ENCODE measurements at regions of chr7 and their contacts with region 1.

Region 1: GRCh38 chr7:64902806-64903721 is at the start of gene ZNF273:
- DNase-seq: peak; percentile 88
- H3K4me3 ChIP-seq: peak within 1 kb of the TSS; percentile 74 to 94 (median 84)
- H3K27ac ChIP-seq: peak within 1 kb of the TSS; percentile 53
- H3K4me1 ChIP-seq: no peaks in the 10 kb centered on the region
- H3K27me3 ChIP-seq: no peaks in the 10 kb centered on the region
- CTCF ChIP-seq: no peak
- total RNA-seq, gene ZNF273: 3.4 to 5.0 TPM

Region 2: GRCh38 chr7:64665980-64666662 is 236.9 kb before region 1 on chr7 and contains the start of gene ZNF107:
- CTCF ChIA-PET with region 1: no interaction called
- dilution Hi-C with region 1: no loop called
- in situ Hi-C with region 1: no loop called
- intact Hi-C with region 1: loop called (anchors 10 kb)
- DNase-seq: peak; percentile 93
- H3K4me3 ChIP-seq: peak within 1 kb of the TSS; percentile 82 to 96 (median 92)
- H3K27ac ChIP-seq: peak within 1 kb of the TSS; percentile 68
- H3K4me1 ChIP-seq: no peaks in the 10 kb centered on the region
- H3K27me3 ChIP-seq: no peaks in the 10 kb centered on the region
- CTCF ChIP-seq: no peak
- total RNA-seq, gene ZNF107: 5.3 to 6.4 TPM

Region 3: GRCh38 chr7:64794171-64794844 is 108.8 kb before region 1 on chr7 and contains the start of gene ZNF138:
- CTCF ChIA-PET with region 1: no interaction called
- dilution Hi-C with region 1: no loop called
- in situ Hi-C with region 1: no loop called
- intact Hi-C with region 1: loop called (anchors 10 kb)
- DNase-seq: peak; percentile 92
- H3K4me3 ChIP-seq: peak within 1 kb of the TSS; percentile 87 to 99 (median 92)
- H3K27ac ChIP-seq: peak within 1 kb of the TSS; percentile 67
- H3K4me1 ChIP-seq: peaks cover 3% of the 10 kb centered on the region
- H3K27me3 ChIP-seq: no peaks in the 10 kb centered on the region
- CTCF ChIP-seq: no peak
- total RNA-seq, gene ZNF138: 3.6 to 8.7 TPM

Region 4: DNA sequence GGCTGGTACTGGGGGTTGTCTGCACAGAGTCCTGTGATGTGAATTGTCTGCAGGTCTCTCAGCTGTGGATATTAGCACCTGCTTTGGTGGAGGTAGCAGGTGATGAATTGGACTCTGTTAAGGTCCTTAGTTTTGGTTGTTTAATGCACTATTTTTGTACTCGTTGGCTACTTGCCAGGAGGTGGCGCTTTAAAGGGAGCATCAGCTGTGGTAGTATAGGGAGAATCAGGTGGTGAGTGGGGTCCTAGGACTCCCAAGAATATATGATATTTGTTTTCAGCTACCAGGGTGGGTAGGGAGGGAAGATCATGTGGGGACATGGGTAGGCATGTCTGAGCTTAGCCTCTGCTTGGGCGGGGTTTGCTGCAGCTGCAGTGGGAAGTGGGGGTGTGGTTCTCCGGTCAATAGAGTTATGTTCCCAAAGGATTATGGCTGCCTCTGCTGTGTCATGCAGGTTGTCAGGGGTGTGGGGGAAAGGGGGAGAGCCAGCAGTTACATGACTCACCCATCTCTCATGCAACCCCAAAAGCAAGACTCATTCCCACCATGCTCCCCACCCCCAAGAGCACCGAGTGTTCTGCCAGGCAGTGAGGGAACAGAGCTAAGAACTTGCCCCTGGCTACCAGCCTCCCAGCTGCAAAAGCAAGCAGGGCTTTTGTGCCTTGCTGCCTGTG is 53.7 kb before region 1 on chr7:
- CTCF ChIA-PET with region 1: no interaction called
- dilution Hi-C with region 1: no loop called
- in situ Hi-C with region 1: no loop called
- intact Hi-C with region 1: loop called (anchors 2 kb)
- DNase-seq: peak; percentile 94
- H3K4me3 ChIP-seq: no peak overlapping the region
- H3K27ac ChIP-seq: peak overlapping the region; percentile 55
- H3K4me1 ChIP-seq: peaks cover 12% of the 10 kb centered on the region
- H3K27me3 ChIP-seq: no peaks in the 10 kb centered on the region
- CTCF ChIP-seq: no peak

Region 5: DNA sequence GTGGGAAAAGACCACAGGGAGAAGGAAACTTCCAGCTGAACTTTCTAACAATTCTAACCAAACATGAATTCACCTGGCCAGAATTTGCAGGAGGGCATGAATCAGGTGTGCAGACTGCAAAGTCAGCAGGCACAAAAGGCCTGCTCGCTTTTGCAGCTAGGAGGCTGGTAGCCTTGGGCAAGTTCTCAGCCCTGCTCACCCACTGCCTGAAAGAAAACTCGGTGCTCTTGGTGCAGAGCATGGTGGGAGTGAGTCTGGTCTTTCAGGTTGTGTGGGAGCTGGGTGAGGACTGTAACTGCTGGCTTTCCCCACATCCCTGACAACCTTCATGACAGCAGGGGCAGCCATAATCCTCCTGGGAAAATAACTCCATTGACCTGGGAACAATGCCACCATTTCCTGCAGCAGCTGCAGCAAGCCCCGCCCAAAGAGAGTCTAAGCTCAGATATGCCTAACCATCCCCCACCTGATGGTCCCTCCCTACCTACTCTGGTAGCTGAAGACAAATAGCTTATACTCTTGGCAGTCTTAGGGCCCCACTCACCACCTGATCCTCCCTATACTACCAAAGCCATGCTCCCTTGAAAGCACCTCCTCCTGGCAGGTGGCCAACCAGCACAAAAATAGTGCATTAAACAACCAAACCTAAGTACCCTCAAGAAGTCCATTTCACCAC is 56.1 kb after region 1 on chr7:
- CTCF ChIA-PET with region 1: no interaction called
- dilution Hi-C with region 1: no loop called
- in situ Hi-C with region 1: no loop called
- intact Hi-C with region 1: no loop called
- DNase-seq: no peak
- H3K4me3 ChIP-seq: no peak overlapping the region
- H3K27ac ChIP-seq: no peak overlapping the region
- H3K4me1 ChIP-seq: no peaks in the 10 kb centered on the region
- H3K27me3 ChIP-seq: no peaks in the 10 kb centered on the region
- CTCF ChIP-seq: no peak

Measured in mammary epithelial cell (primary cell).